ENCODE measurements at regions of chr2 and their contacts with region 1.

Region 1: DNA sequence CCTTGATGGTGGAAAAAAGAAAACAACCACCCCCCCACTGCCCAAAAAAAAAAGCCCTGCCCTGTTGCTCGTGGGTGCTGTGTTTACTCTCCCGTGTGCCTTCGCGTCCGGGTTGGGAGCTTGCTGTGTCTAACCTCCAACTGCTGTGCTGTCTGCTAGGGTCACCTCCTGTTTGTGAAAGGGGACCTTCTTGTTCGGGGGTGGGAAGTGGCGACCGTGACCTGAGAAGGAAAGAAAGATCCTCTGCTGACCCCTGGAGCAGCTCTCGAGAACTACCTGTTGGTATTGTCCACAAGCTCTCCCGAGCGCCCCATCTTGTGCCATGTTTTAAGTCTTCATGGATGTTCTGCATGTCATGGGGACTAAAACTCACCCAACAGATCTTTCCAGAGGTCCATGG is 28.0 kb downstream of the MAL start:
- DNase-seq: peak; percentile 33
- H3K4me3 Mint-ChIP-seq: no peak overlapping the region
- H3K27ac Mint-ChIP-seq: peak overlapping the region; percentile 6
- H3K4me1 Mint-ChIP-seq: peaks cover 85% of the 10 kb centered on the region
- H3K27me3 Mint-ChIP-seq: peaks cover 6% of the 10 kb centered on the region

Region 2: DNA sequence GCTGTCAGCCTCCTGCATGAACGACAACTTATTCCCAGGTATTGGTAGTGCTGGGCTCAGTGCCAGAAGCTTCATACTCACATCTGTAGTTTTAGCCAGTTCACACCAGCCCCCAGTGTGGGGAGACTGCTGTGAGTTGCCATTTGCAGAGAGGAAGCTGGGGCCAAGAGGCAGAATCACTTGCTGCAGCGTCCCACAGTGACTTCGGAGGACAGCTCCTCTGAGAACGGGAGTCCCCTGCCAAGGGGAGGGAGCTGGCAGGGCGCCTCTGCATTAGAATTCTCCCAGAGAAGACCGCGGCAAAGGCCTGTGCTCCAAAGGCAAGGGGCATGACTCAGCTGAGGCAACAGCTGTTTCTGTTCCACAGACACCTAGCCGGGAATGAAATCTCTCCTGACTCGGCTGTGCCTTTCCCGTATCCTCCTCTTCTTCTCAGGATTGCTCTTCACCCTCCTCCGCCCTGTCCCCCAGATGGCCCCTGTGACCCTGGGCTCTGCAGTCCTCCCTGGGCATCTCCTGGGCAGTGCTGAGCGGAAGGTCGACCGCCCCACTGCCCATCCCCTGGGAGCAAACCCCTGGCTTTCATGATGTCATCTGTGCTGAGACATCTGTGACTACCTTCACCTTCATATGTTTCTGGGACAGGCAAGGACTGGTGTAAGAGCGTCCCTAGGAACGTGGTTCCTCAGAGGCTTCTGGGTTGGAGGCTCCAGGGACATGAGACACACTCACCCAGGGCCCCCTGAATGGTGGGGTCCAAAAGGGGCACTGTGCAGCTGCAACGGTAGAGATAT is 10.0 kb before region 1 on chr2:
- CTCF ChIA-PET with region 1: interaction called, 13 read pairs
- DNase-seq: no peak
- H3K4me3 Mint-ChIP-seq: no peak overlapping the region
- H3K27ac Mint-ChIP-seq: peak overlapping the region; percentile 67
- H3K4me1 Mint-ChIP-seq: peaks cover 82% of the 10 kb centered on the region
- H3K27me3 Mint-ChIP-seq: no peaks in the 10 kb centered on the region